Naive thymus-derived CD4-positive, alpha-beta T cell (primary cell): ENCODE measurements at regions of chr6 and their contacts with region 1.

Region 1: DNA sequence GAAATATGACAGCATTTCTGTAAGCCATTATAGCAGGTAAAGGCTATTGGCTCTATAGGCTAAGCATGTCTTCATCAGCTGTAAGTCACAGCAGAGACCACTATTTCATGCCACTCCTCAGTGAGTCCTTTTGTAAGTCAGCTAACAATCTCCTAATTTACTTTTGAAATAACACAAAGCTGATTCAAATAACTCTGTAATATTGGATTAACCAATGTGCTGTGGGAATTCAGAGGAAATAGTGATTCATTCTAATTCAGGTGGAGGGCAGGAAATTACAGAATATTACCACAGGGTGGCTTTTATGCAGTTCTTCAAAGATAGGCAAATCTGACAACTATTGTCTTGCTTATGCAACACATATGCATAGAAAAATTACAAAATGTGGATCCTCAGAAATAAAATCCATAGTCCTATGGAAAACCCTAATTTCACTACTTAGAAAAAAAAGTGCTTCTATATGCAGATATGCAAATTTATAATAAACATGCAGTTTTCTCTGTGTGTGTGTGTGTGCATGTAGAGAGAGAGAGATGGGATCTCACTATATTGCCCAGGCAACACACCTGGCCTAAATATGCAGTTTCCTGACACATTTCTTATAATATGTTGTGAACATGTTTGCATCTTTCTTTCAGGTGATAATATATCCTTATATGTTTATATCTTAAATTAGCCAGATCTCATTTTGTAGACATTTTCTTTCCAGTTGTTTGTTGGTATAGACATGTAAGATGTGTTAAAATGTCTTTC is 4.8 kb upstream of the SMIM28 start:
- DNase-seq: peak in 5 of 9 donors; percentile 7 to 26 (median 18)
- ATAC-seq: peak; percentile 55
- H3K4me3 ChIP-seq: no peak overlapping the region
- H3K4me3 Mint-ChIP-seq: no peak overlapping the region
- H3K27ac ChIP-seq: no peak overlapping the region
- H3K27ac Mint-ChIP-seq: no peak overlapping the region
- H3K4me1 ChIP-seq: no peaks in the 10 kb centered on the region
- H3K4me1 Mint-ChIP-seq: no peaks in the 10 kb centered on the region
- H3K27me3 ChIP-seq: no peaks in the 10 kb centered on the region
- H3K27me3 Mint-ChIP-seq: peaks cover 0 to 29% (median 5%) of the 10 kb centered on the region in 5 donors

Region 2: GRCh38 chr6:137465378-137466009 is 907.4 kb before region 1 on chr6:
- CTCF ChIA-PET with region 1: no interaction called
- POLR2A ChIA-PET with region 1: no interaction called
- intact Hi-C with region 1: loop called in 1 of 2 experiments (anchors 5 kb)
- DNase-seq: no peak
- ATAC-seq: no peak
- H3K4me3 ChIP-seq: no peak overlapping the region
- H3K4me3 Mint-ChIP-seq: no peak overlapping the region
- H3K27ac ChIP-seq: no peak overlapping the region
- H3K27ac Mint-ChIP-seq: no peak overlapping the region
- H3K4me1 ChIP-seq: no peaks in the 10 kb centered on the region
- H3K4me1 Mint-ChIP-seq: no peaks in the 10 kb centered on the region
- H3K27me3 ChIP-seq: no peaks in the 10 kb centered on the region
- H3K27me3 Mint-ChIP-seq: peaks cover 7 to 40% (median 11%) of the 10 kb centered on the region in 5 donors

Region 3: DNA sequence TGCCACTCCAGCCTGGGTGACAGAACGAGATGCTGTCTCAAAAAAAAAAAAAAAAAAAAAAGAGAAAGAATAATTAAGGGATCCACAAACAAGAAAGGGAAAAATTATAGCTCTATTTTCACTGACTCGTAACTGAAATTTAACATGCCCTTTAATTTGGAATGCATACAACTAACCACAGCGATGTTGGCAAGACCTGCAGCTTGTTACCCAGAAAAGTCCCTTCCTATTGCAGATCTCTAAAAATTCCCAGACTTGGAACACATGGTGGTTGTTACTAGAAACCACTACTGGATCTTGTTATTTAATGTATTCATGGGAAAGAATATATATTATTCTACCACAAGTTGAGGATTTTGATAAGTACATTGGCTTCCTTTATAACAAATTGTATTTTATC is 23.0 kb before region 1 on chr6:
- CTCF ChIA-PET with region 1: no interaction called
- POLR2A ChIA-PET with region 1: no interaction called
- intact Hi-C with region 1: no loop called
- DNase-seq: no peak
- ATAC-seq: no peak
- H3K4me3 ChIP-seq: no peak overlapping the region
- H3K4me3 Mint-ChIP-seq: no peak overlapping the region
- H3K27ac ChIP-seq: no peak overlapping the region
- H3K27ac Mint-ChIP-seq: no peak overlapping the region
- H3K4me1 ChIP-seq: no peaks in the 10 kb centered on the region
- H3K4me1 Mint-ChIP-seq: no peaks in the 10 kb centered on the region
- H3K27me3 ChIP-seq: peaks cover 0 to 3% of the 10 kb centered on the region in 2 donors
- H3K27me3 Mint-ChIP-seq: peaks cover 12 to 28% (median 19%) of the 10 kb centered on the region in 5 donors

Region 4: DNA sequence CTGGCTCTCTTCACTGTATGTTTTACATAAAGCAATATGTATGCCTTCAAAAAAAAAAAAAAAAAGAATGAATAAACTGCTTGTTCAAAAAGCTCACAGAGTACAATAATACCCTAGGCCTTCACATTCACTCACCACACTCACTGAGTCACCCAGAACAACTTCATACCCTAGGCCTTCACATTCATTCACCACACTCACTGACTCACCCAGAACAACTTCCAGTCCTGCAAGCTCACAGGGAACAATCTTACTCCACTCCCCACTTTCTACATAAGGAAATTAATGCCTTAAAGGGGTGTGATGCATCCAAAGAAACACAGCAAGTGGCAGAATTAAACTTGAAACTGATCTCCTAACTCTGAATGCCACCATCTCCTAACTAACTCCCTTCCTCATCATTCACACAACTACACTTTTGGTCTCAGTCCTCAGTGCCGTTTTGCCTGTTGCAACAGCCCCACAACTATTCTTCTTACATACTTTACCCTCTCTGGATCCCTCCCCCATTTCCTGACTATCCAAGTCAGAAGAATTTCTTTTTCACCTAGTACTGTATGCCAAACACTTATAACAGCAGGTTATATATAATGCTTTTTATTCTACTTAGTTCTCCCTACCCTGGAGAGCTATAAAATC is 92.2 kb after region 1 on chr6:
- CTCF ChIA-PET with region 1: no interaction called
- POLR2A ChIA-PET with region 1: no interaction called
- intact Hi-C with region 1: no loop called
- DNase-seq: no peak
- ATAC-seq: no peak
- H3K4me3 ChIP-seq: no peak overlapping the region
- H3K4me3 Mint-ChIP-seq: no peak overlapping the region
- H3K27ac ChIP-seq: no peak overlapping the region
- H3K27ac Mint-ChIP-seq: peak overlapping the region in 2 of 9 donors; percentile 19 to 52
- H3K4me1 ChIP-seq: no peaks in the 10 kb centered on the region
- H3K4me1 Mint-ChIP-seq: peaks cover 0 to 4% (median 0%) of the 10 kb centered on the region in 7 donors
- H3K27me3 ChIP-seq: no peaks in the 10 kb centered on the region
- H3K27me3 Mint-ChIP-seq: no peaks in the 10 kb centered on the region